Ovary (tissue), 10 donors: ENCODE measurements at regions of chr12 and their contacts with region 1.

Region 1: DNA sequence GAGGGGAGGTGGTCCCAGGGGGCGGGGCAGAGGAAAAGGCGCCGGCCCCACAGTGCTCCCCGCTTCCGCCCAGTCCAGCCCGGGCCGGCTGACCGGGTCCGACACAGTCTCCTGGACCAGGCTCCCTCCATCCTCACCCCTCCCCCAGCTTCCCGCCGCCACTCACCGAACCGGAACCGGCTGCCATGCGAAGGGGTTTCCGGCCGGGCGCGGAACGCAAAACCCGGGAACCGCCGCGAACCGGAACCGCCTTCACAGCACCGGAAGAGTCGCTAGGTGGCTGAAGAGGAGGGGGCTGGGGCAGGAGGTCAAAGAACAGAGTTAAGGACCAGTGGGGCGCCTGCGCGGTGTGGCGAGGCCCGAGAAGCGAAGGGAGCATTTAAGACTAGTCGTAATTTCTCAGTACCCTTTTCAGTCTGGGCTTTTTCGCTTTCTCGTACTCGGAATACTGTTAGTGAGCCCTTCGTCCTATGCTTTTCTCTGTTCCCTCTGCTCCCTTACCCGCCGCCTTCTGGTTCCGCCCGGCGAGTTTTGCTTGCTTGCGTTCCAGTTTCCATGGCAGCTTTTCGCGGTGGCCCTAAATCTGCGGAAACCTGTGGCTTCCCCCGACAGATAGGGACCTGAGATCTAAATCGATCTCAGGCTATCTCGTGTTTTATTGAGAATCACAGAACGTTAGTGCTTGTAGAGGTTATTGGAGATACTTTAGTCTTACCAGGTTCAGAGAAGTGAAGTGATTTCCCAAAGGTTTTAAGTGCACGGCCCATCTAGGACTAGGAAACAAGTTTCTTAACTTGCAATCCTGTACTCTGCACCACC is at the start of gene SENP1:
- DNase-seq: peak; percentile 87 to 93 (median 89)
- H3K4me3 ChIP-seq: peak within 1 kb of the TSS; percentile 75
- H3K27ac ChIP-seq: peak within 1 kb of the TSS; percentile 70 to 85
- H3K4me1 ChIP-seq: peaks cover 7% of the 10 kb centered on the region
- H3K27me3 ChIP-seq: no peaks in the 10 kb centered on the region
- CTCF ChIP-seq: peak; percentile 20 to 48 (median 48)
- EP300 ChIP-seq: no peak
- POLR2A ChIP-seq: peak; percentile 19
- total RNA-seq, gene SENP1: 14.7 to 28.9 (median 21.6) TPM

Region 2: GRCh38 chr12:48157018-48157888 is 51.2 kb after region 1 on chr12 and contains the start of gene ASB8:
- intact Hi-C with region 1: loop called in 2 of 4 experiments (anchors 5 to 10 kb)
- DNase-seq: peak; percentile 98 to 100 (median 99)
- H3K4me3 ChIP-seq: peak within 1 kb of the TSS; percentile 79
- H3K27ac ChIP-seq: peak within 1 kb of the TSS; percentile 26 to 81
- H3K4me1 ChIP-seq: peaks cover 5% of the 10 kb centered on the region
- H3K27me3 ChIP-seq: no peaks in the 10 kb centered on the region
- CTCF ChIP-seq: peak; percentile 30 to 82 (median 79)
- EP300 ChIP-seq: no peak
- POLR2A ChIP-seq: no peak
- total RNA-seq, gene ASB8: 18.8 to 41.4 (median 29.4) TPM

Region 3: DNA sequence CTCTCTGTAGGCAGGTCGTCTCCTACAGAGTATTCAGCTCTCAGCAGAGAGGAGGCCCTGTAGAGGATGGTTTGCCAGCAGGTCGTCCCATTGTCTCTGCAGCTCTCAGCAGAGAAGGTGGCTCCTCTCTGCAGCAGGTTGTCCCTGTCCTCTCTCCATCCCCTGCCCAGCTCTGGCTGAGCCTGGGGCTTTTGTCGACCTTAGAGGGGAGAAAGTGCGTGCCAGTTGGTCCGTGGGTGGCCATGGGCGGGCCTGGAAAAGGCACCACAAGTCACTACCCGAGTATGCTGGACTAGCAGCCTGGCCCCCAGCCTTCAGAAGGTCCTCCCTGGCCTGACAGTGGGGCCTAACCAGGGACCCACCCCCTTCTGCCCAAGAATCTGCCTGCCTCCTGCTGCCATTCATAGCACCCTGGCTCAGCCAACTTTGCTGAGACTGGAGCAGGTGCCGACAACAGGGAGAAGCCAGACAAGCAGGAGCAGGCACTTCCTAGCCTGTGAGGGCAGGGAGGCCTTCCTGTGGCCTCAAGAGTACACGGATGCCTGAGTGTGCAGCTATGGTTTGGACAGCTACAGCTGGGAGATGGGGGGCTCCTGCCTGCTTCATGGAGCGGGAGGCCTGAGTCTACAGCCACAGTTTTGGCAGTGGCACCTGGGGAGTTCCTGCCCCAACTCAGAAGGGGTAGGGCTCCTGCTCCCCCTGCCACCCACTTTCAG is 1373.0 kb after region 1 on chr12:
- intact Hi-C with region 1: no loop called
- DNase-seq: no peak
- H3K4me3 ChIP-seq: no peak overlapping the region
- H3K27ac ChIP-seq: no peak overlapping the region
- H3K4me1 ChIP-seq: no peaks in the 10 kb centered on the region
- H3K27me3 ChIP-seq: no peaks in the 10 kb centered on the region
- CTCF ChIP-seq: no peak
- EP300 ChIP-seq: no peak
- POLR2A ChIP-seq: no peak